GM10248 (cell line): ENCODE measurements at regions of chr11 and their contacts with region 1.

Region 1: DNA sequence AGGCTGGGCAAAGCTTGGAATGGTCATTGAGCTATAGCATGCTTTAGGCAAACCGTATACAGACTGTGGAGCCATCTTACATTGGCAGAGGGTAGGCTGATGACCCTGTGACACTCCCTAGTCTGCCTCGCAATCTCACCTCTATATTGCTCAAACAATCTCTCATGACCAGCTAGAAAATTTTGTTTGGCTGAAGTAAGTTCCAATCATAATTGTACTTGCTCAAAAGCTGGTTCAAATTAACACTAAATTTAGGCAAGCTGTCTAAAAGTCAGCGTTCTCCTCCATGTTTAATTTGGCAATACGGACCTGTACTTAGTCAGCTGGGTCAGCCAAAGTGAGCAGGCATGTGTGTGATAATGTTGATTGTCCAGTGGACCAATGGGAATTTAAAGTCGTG is 133.0 kb downstream of the SWAP70 start:
- DNase-seq: no peak
- CTCF ChIP-seq: no peak

Region 2: DNA sequence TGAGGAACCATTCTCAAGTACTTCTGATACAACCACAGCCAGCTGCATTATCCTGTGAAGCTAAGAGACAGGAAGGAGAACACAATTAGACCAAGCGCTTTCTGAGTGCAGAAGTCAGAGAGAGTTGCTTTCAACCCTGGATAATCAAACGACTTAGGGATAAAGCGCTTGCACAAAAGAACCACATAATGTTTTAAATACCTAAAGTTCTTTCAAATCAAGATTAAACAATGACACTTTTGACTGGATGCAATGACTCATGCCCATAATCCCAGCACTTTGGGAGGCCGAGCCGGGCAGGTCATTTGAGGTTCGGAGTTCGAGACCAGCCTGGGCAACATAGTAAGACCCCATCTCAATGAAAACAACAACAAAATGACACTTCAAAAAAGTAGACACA is 12.1 kb after region 1 on chr11:
- CTCF ChIA-PET with region 1: interaction called, 13 read pairs
- POLR2A ChIA-PET with region 1: no interaction called
- DNase-seq: no peak
- CTCF ChIP-seq: no peak

Region 3: DNA sequence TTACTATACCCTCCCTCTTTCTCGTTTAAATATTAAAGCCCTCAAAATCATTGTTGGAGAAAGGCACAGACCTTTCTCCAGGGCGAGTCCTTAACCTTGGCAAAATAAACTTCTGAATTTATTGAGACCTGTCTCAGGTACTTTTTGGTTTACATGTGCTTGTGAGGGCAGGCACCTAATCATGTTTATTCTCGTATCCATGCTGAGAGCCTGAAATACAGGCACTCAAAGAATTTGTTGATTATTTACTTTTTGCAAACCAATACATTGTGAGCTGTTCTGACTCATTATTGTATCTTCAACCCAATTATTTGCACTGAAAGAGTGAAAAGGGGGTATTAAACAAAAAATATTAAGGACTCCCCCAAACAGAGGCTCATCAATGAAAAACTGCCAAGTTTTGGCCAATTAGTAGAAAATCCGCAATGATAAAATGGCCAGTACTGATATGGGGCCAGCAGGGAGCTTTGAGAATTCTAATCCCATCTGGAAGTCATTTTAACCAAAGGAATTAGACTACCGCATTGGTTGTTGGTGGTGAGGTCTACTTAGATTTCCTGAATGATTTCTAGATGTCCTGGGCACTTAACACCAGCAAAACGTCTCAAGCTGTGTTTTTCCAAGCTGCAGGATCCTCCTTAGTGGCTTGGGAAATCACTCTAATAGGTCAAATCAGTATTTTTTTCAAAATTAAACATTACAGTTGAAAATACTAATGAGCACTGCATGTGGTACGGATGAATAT is 24.3 kb after region 1 on chr11:
- CTCF ChIA-PET with region 1: no interaction called
- POLR2A ChIA-PET with region 1: no interaction called
- DNase-seq: no peak
- CTCF ChIP-seq: no peak